ENCODE measurements at regions of chr2 and their contacts with region 1.

Region 1: GRCh38 chr2:80326214-80326613 is 21.7 kb upstream of the LRRTM1 start:
- DNase-seq: peak; percentile 45
- H3K4me3 ChIP-seq: no peak overlapping the region; a peak in 1 of 4 replicates
- H3K27ac ChIP-seq: no peak overlapping the region
- H3K4me1 ChIP-seq: peaks cover 0 to 9% of the 10 kb centered on the region in 2 experiments; a peak in 2 of 4 replicates
- H3K27me3 ChIP-seq: no peaks in the 10 kb centered on the region
- CTCF ChIP-seq: peak; percentile 69
- EP300 ChIP-seq: no peak
- RAD21 ChIP-seq: peak; percentile 86

Region 2: DNA sequence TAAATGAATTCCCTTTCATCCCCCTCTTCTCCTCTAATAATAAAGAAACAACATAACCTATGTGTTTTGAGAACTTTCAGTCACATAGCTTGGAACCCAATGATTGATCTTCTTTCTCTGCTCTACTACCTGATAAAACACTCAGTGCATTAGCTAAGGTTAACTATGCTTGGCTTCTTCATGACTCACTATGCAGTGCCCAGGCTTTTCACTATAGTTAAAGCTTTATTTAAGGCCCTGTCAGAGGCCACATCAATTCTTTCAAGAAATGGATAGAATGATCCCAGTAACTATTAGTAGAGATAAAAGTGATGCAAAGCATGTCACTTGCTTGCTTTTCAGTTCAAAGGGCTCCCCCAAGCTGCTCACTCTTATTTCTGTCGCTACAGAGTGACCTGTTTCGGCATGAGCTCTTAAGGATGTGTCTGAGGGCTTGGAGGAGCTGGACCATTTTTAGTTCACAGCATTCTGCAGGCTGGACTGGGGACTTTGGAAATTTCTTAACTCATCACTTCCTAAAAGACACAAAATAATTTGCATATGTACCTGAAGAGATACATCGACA is 405.6 kb before region 1 on chr2:
- CTCF ChIA-PET with region 1: no interaction called
- POLR2A ChIA-PET with region 1: no interaction called
- DNase-seq: no peak
- H3K4me3 ChIP-seq: no peak overlapping the region
- H3K27ac ChIP-seq: no peak overlapping the region
- H3K4me1 ChIP-seq: no peaks in the 10 kb centered on the region
- H3K27me3 ChIP-seq: no peaks in the 10 kb centered on the region
- CTCF ChIP-seq: no peak
- EP300 ChIP-seq: no peak
- RAD21 ChIP-seq: no peak

Region 3: DNA sequence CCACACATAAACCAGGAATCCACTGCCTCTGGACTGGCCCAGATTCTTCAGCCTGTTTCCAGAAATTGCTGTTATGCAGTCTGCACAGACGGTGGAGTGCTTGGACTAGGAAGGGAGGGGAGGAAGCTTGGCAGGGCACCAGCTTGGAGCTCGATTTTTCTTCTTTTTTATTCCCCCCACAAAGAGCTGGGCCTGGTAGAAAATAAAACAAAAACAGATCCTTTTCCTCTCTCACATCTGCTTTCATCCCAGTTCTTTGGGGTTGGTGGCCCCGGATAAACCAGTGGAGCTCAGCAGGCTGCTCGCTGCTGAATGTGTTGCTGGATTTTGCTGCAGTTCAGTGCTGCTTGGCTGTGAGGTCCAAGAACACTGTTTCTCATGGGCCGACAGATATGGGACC is 37.6 kb before region 1 on chr2:
- CTCF ChIA-PET with region 1: interaction called, 15 read pairs
- POLR2A ChIA-PET with region 1: no interaction called
- DNase-seq: peak; percentile 29
- H3K4me3 ChIP-seq: no peak overlapping the region
- H3K27ac ChIP-seq: no peak overlapping the region
- H3K4me1 ChIP-seq: peaks cover 0 to 3% of the 10 kb centered on the region in 2 experiments; a peak in 1 of 4 replicates
- H3K27me3 ChIP-seq: no peaks in the 10 kb centered on the region
- CTCF ChIP-seq: peak; percentile 40
- EP300 ChIP-seq: no peak
- RAD21 ChIP-seq: peak; percentile 74

Region 4: DNA sequence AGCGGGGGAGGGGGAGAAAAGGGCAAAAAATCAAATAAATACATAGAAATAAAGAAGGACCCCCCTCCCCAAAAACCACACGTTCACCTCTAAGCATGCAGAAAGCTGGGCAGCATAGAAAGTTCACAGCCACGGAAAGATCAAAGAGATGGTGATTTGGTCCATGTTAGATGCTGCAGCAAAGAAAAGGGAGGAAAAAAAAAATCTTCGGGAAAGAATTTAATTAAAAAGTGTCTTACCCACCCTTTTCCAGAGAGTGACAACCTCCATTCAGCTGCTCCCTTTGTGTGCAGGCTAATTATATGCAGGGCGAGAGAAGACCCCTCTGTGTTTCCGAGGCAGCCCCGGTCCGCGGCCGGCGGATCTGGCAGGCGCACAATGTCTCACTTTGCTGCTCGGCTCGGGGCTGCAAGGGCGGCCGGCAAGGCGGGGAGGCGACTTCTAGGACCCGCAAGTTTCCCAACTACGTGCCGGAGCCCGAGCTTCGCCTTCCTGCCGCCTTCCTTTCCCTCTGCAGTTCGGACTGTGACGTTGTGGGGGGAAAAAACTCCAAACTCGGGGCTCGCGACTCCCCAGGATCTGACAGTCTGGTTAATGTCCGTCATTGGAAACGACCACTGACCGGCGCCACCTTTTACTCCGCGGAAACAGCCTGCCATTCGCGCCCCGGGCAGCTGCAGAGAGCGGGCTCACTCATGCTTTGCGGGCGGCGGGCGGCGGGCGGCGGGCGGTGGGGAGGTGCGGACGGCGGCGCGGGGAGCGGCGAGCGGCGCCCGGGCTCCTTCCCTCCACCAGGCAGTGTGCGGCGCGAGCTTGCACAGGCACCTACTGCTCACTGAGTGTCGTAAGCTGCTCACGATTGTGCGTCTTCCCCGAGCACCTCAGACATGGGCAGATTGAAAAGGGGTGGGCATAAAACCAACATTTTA is 22.0 kb before region 1 on chr2 and contains the start of gene LRRTM1:
- CTCF ChIA-PET with region 1: interaction called, 12 read pairs
- POLR2A ChIA-PET with region 1: no interaction called
- DNase-seq: peak; percentile 78
- H3K4me3 ChIP-seq: peak within 1 kb of the TSS; percentile 51 to 57
- H3K27ac ChIP-seq: no peak within 1 kb of the TSS
- H3K4me1 ChIP-seq: peaks cover 0 to 24% of the 10 kb centered on the region in 2 experiments; a peak in 1 of 4 replicates
- H3K27me3 ChIP-seq: peaks cover 32% of the 10 kb centered on the region
- CTCF ChIP-seq: no peak
- EP300 ChIP-seq: no peak
- RAD21 ChIP-seq: peak; percentile 45
- polyA plus RNA-seq, gene LRRTM1: 1.1 and 1.6 TPM in 2 replicates

Region 5: DNA sequence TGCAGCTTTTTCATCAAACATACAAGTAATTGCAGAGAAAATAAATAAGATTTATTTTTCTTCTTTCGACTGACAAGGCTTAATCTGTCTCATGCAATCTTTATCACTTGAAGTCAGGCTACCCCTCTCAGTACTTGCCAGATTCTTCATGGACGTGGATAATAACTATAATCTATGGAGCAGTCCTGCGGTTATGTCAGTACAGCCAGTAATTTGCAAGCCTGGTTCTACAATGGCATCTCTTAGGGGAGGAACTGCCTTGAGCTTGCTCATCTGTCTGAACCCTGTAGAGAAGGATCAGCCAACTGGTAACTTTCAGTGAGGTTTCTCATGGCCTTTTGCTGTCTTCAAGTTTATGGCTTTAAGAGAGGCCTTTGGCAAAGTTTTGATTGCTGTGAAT is 13.8 kb after region 1 on chr2:
- CTCF ChIA-PET with region 1: interaction called, 17 read pairs
- POLR2A ChIA-PET with region 1: no interaction called
- DNase-seq: no peak
- H3K4me3 ChIP-seq: no peak overlapping the region
- H3K27ac ChIP-seq: no peak overlapping the region
- H3K4me1 ChIP-seq: peaks cover 0 to 6% of the 10 kb centered on the region in 2 experiments; a peak in 2 of 4 replicates
- H3K27me3 ChIP-seq: no peaks in the 10 kb centered on the region
- CTCF ChIP-seq: no peak
- EP300 ChIP-seq: no peak
- RAD21 ChIP-seq: no peak

Region 6: GRCh38 chr2:80348953-80349352 is 22.7 kb after region 1 on chr2:
- CTCF ChIA-PET with region 1: interaction called, 12 read pairs
- POLR2A ChIA-PET with region 1: no interaction called
- DNase-seq: no peak
- H3K4me3 ChIP-seq: no peak overlapping the region
- H3K27ac ChIP-seq: no peak overlapping the region; a peak in 1 of 4 replicates
- H3K4me1 ChIP-seq: no peaks in the 10 kb centered on the region
- H3K27me3 ChIP-seq: no peaks in the 10 kb centered on the region
- CTCF ChIP-seq: no peak
- EP300 ChIP-seq: no peak
- RAD21 ChIP-seq: no peak

Region 7: DNA sequence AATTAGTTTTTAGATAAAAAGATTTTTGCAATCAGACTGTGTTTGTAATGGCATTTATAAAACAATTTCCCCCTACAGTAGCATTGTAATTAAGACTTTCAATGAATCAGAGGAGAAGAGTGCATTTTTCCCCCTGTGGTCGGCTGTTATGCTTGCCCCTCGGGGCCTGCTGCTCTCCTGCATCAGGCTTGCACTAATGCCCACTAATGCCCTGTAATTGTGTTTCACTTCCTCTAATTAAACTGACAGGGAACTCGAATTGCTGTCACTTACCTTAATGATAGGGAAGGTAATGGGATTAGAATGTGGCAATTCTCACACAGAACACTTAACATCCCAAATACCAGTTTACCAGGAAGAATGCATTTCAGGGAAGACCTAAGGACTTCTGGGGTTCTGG is 39.5 kb after region 1 on chr2:
- CTCF ChIA-PET with region 1: interaction called, 17 read pairs
- POLR2A ChIA-PET with region 1: no interaction called
- DNase-seq: peak; percentile 28
- H3K4me3 ChIP-seq: no peak overlapping the region
- H3K27ac ChIP-seq: peak overlapping the region in 1 of 2 experiments; percentile 58; a peak in 2 of 4 replicates
- H3K4me1 ChIP-seq: peaks cover 5 to 16% of the 10 kb centered on the region in 2 experiments; a peak in 2 of 4 replicates
- H3K27me3 ChIP-seq: no peaks in the 10 kb centered on the region
- CTCF ChIP-seq: no peak
- EP300 ChIP-seq: peak in 1 of 2 experiments; percentile 85; a peak in 2 of 4 replicates
- RAD21 ChIP-seq: no peak

Region 8: DNA sequence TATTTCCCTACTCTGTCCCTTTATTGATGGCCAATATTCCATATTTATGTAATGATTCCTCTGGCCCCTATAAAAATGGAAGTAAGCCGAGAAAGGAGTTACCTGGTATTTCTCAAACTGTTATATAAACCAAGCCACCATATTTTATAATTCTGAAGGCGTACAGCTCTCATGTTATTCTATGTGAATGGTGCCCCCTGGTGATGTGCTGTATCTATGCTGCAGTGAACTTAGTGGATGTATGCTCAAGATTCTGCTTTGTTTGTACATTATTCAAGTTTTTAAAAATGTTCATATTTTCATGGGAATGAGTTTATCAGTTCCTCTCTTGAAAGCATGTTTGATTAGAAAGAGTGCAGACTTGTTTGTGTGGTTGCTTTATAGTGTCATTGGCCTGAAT is 172.9 kb after region 1 on chr2:
- CTCF ChIA-PET with region 1: interaction called, 179 read pairs
- POLR2A ChIA-PET with region 1: interaction called, 3 read pairs
- DNase-seq: peak; percentile 30
- H3K4me3 ChIP-seq: no peak overlapping the region; a peak in 1 of 4 replicates
- H3K27ac ChIP-seq: no peak overlapping the region
- H3K4me1 ChIP-seq: peaks cover 0 to 11% of the 10 kb centered on the region in 2 experiments; a peak in 3 of 4 replicates
- H3K27me3 ChIP-seq: no peaks in the 10 kb centered on the region
- CTCF ChIP-seq: peak; percentile 88
- EP300 ChIP-seq: no peak
- RAD21 ChIP-seq: peak; percentile 96

Measured in SK-N-SH (cell line).